Activated naive CD8-positive, alpha-beta T cell treated with anti-CD3 and anti-CD28 coated beads, Interleukin-2, amount 10 ng/mL, durations not matched to agents 7 days and 5 days (primary cell): ENCODE measurements at regions of chr17 and their contacts with region 1.

Region 1: DNA sequence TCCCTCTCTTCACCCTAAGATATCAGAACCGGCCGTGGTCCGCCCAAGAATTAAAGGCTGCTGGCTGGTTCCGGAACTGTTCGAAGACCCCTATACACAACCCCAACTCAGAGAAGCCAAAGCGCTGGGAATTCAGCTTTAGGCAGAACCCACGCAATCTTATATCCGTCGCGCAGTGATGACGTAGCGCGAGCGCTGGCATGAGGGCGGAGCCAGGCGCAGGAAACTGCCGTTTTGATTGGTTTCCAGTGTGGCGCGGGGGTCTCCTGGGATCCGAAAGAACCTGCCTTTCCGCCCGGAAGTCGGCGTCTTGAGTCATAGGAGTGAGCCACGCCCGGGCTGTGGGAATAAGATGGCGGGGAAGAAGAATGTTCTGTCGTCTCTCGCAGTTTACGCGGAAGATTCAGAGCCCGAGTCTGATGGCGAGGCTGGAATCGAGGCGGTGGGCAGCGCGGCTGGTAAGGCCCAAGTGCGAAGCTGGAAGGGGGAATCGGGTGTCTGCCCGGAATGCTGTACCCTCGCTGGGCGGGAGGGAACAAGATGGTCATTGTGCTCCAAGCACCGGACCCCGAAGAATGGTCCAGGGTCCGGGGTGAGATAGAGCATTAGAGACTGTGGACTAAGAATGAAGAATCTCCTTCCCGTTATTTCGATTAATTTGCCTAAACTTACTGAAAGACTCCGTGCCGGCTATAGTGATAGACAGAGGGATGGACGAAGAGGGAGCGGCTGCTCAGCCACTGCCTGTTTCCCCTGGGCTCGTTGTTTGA is at the starts of genes RECQL5 and SAP30BP:
- DNase-seq: peak; percentile 95
- ATAC-seq: peak; percentile 100
- H3K4me3 Mint-ChIP-seq: peak within 1 kb of the TSS; percentile 68
- H3K27ac Mint-ChIP-seq: peak within 1 kb of the TSS; percentile 76
- H3K4me1 Mint-ChIP-seq: peaks cover 23% of the 10 kb centered on the region
- H3K27me3 Mint-ChIP-seq: no peaks in the 10 kb centered on the region
- total RNA-seq, gene RECQL5: 49.8 to 50.8 TPM
- total RNA-seq, gene SAP30BP: 112 to 113 TPM

Region 2: GRCh38 chr17:75689441-75689873 is 22.3 kb after region 1 on chr17:
- POLR2A ChIA-PET with region 1: interaction called, 13 read pairs
- DNase-seq: peak; percentile 39
- ATAC-seq: peak; percentile 90
- H3K4me3 Mint-ChIP-seq: peak overlapping the region; percentile 69
- H3K27ac Mint-ChIP-seq: peak overlapping the region; percentile 87
- H3K4me1 Mint-ChIP-seq: peaks cover 42% of the 10 kb centered on the region
- H3K27me3 Mint-ChIP-seq: no peaks in the 10 kb centered on the region

Region 3: GRCh38 chr17:75738218-75738802 is 71.1 kb after region 1 on chr17:
- POLR2A ChIA-PET with region 1: interaction called, 10 read pairs
- DNase-seq: peak; percentile 62
- ATAC-seq: peak; percentile 93
- H3K4me3 Mint-ChIP-seq: peak overlapping the region; percentile 65
- H3K27ac Mint-ChIP-seq: peak overlapping the region; percentile 92
- H3K4me1 Mint-ChIP-seq: peaks cover 11% of the 10 kb centered on the region
- H3K27me3 Mint-ChIP-seq: no peaks in the 10 kb centered on the region